Left colon (tissue), 2 donors: ENCODE measurements at regions of chr12 and their contacts with region 1.

Region 1: DNA sequence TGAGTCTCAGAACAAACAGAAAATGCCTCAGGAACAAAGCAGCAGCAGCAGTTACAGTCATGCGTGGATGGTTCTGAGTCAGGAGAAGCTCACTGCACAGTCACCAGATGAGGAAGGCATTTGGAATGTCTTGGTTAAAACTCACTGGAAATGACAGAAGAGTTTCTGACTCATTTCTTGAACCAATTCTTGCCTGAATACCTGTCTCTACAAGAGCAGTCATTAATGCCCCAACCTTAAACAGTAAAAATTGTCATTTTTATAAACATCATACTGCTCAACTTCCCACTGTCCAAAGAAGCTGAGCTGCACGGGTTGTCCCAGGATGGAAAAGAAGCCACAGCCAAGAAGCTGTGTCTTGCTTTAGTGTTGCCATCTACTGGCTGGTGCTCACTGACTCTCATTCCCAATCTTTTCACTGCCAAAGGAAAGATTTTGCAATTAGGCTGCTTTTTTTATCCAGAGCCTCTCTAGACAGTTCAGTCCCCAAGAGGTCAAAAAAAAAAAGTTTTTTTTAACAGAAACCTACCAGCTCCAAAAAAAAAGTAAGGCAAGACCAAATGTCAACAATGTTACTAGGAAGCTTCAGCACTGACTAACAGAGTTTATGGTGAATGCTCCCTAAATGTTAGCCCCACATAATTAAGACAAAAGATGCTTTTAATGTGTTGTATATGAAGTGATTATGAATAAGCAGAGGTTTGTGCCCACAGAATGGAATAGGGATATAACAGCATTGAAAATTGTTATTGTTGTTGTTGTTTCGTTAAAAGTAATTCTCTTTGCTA is 40.4 kb downstream of the KICS2 start:
- DNase-seq: peak; percentile 21 to 43
- ATAC-seq: peak; percentile 91

Region 2: DNA sequence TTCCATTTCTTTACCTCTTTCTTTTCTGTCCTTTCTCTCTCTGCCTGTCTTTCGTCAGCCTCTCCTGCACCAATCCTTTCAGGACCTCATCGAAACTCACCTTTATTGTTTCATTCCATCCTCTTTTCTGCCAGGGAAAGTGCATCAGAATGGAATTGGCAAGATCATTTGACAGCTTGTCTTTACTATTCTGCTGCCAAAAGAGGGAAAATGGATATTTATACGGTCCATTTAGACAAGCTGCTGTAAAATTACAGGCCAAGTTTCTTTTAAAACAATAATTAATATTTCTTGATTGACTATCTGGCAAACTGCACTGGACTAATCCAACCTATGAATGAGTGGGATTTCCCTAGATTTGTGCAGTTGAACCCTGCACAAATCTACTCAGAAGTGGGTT is 344.8 kb before region 1 on chr12:
- intact Hi-C with region 1: loop called in 1 of 2 experiments (anchors 5 kb)
- DNase-seq: no peak
- ATAC-seq: no peak